Dendritic cell treated with granulocyte-macrophage colony-stimulating factor and Interleukin-4, amounts not matched to agents 40 ng/mL and 50 ng/mL, for 4 days (primary cell): ENCODE measurements at regions of chr1 and their contacts with region 1.

Region 1: DNA sequence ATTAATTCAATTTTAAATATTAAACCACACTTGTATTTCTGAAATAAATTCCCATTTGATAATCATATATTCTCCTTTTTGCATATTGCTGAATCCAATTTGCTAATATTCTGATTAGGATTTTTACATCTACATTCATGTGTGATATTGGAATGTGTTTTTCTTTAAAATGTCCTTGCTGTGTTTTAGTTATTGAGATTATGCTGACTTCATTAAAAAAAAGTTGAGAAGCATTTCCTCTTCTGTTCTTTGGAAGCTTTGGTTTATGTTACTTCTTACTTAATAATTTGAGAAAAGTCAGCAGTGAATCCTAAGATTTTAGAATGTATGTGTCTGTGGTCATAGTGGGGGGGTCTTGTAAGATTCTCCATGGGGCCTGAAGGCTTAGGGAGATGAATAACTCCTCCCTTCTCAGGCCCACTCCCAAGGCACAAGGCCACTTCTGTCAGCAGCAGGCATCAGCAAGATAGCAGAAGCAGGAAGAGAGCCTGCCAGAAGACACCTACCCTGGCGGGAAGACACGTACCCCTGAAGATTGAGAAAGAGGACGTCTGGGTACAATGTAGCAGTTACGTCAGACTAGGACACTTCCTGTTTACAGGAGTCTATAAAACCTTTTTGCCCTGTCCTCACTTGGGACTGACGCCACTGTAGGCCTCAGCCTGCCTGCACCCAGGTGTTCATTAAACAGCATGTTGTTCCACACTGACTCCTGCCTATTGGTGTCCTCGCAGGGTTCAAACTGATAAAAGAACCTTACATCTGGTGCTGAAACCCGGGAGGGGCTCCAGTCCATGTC is 56.9 kb downstream of the ODF2L start:
- H3K4me3 Mint-ChIP-seq: no peak overlapping the region
- H3K27ac Mint-ChIP-seq: peak overlapping the region; percentile 95
- H3K4me1 Mint-ChIP-seq: peaks cover 28% of the 10 kb centered on the region
- H3K27me3 Mint-ChIP-seq: no peaks in the 10 kb centered on the region

Region 2: DNA sequence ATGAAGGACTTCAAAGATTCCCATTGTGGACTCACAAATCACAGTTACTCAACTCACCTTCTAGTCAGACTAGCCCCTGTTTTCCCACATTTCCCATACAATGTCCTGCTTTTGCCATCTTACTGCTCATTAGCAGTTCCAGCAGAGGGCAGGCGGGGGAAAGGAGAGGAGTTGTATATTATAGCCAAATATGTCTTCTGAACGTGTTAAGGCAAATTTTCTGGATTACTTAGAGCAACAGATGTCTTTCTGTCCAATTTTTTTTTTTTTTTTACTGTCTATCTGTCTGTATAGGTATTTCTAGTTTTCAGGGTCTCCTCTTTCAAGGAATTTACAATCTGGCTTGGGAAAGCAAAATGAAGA is 844.3 kb before region 1 on chr1:
- intact Hi-C with region 1: no loop called
- H3K4me3 Mint-ChIP-seq: no peak overlapping the region
- H3K27ac Mint-ChIP-seq: no peak overlapping the region
- H3K4me1 Mint-ChIP-seq: no peaks in the 10 kb centered on the region
- H3K27me3 Mint-ChIP-seq: no peaks in the 10 kb centered on the region

Region 3: DNA sequence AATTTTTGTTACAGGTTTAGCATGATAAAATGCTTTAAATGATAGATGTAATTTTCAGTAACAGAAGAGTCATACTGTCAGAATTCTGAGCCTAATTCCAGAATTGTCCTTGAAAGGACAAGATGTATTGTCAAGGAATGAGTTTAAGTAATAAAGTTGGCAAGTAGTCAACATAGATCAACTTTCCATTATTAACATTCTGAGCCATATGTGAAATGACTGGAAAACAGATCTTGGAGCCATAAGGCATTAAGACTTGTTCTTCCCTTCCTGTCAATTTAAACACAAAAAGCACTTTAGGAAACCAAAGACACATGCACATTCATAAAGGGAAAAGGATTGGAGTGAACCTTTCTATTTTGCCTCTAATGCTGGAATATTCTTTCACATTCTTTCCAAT is 50.1 kb before region 1 on chr1:
- intact Hi-C with region 1: loop called (anchors 5 kb)
- H3K4me3 Mint-ChIP-seq: no peak overlapping the region
- H3K27ac Mint-ChIP-seq: no peak overlapping the region
- H3K4me1 Mint-ChIP-seq: peaks cover 14% of the 10 kb centered on the region
- H3K27me3 Mint-ChIP-seq: no peaks in the 10 kb centered on the region